Activated T-helper 1 cell treated with anti-CD3 and anti-CD28 coated beads, Interleukin-12 subunit alpha, Interleukin-12 subunit beta, Interleukin-2, Interleukin-4 antibody, amounts not matched to agents 30 ng/mL and 10 ng/mL and 1 ng/mL, durations not matched to agents 14 hours and 24 hours and 36 hours (primary cell): ENCODE measurements at regions of chr2 and their contacts with region 1.

Region 1: DNA sequence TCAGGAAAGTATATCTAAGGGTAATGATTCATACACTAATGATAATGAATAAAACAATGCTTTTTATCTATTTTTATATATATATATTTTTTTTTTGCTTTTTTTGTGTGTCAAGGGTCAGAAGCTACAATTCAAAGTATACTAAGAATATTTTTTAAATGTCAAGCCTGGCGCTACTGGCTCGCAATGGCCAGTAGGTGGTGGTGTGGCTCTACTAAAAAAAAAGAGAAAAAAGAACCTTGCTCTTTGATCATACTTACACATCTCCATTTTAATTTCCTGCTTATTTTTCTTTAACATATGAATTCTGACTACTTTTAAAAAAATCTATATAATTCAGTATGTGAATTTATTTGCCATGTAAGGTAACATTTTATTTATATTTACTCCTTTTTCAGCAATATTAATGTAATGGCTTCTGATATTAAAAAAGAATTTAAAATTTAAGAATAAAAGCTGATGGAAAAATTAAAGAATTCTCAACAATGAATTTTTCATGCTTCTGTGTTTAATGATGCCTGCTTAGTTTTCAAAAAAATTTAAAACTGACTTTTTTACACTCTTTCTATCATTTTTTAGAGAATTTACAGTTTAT is 232.9 kb downstream of the GULP1 start:
- DNase-seq: no peak
- H3K4me3 Mint-ChIP-seq: no peak overlapping the region
- H3K27ac Mint-ChIP-seq: no peak overlapping the region
- H3K4me1 Mint-ChIP-seq: no peaks in the 10 kb centered on the region
- H3K27me3 Mint-ChIP-seq: peaks cover 2% of the 10 kb centered on the region

Region 2: GRCh38 chr2:188983427-188984064 is 458.9 kb after region 1 on chr2:
- intact Hi-C with region 1: loop called (anchors 1 kb)
- DNase-seq: no peak
- H3K4me3 Mint-ChIP-seq: no peak overlapping the region
- H3K27ac Mint-ChIP-seq: no peak overlapping the region
- H3K4me1 Mint-ChIP-seq: peaks cover 12% of the 10 kb centered on the region
- H3K27me3 Mint-ChIP-seq: peaks cover 2% of the 10 kb centered on the region

Region 3: DNA sequence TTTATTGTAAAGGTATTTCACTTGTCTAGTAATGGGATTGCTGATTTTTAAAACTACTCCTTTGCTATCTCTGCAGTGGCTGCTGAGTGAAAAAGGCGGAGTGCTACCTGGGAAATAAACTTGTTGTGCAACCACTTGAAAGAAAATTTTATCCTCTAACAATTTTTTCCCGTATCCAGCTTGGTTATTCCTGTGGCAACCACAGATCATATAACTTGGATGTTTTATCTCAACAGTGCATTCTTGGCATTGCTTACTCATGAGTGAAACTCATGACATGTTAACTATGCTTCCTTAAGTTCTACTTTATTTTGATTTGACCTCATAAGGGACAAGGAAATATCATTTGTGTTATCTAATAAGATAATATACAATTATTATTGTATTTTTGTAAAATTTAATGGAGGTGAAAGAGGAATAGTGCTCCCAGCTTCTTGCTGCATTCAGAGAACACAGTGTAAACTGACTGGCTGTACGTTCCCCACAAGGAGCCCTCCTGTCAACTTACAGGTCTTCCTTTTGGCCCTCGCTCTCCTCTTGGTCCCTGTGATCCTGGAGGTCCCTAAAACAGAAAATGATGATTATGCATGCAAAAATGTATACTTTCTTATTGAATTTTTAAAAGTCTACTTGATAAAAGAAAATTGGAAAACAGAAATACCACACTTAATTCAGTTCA is 572.3 kb after region 1 on chr2:
- intact Hi-C with region 1: loop called (anchors 5 kb)
- DNase-seq: no peak
- H3K4me3 Mint-ChIP-seq: no peak overlapping the region
- H3K27ac Mint-ChIP-seq: no peak overlapping the region
- H3K4me1 Mint-ChIP-seq: no peaks in the 10 kb centered on the region
- H3K27me3 Mint-ChIP-seq: no peaks in the 10 kb centered on the region

Region 4: DNA sequence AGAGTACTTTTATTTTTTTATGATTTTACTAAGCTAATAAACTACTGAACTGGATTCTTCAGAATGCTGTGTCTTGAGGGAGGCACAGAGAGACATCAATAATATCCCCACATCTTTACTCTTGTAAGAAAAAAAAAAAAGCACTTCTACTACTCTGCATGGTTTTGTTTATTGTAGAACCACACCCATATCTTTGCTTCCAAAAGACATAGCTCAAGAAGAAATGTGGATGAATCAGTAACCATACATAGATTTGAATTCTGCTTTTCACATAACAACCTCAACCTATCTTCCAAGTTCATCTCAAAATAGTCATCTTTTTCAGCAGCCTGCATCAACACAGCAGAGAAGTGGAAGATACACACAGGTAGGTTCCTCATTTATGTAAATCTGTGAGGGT is 667.1 kb after region 1 on chr2:
- intact Hi-C with region 1: no loop called
- DNase-seq: no peak
- H3K4me3 Mint-ChIP-seq: no peak overlapping the region
- H3K27ac Mint-ChIP-seq: no peak overlapping the region
- H3K4me1 Mint-ChIP-seq: no peaks in the 10 kb centered on the region
- H3K27me3 Mint-ChIP-seq: no peaks in the 10 kb centered on the region

Region 5: GRCh38 chr2:189412330-189412953 is 887.8 kb after region 1 on chr2:
- intact Hi-C with region 1: loop called (anchors 1 kb)
- DNase-seq: peak; percentile 14
- H3K4me3 Mint-ChIP-seq: no peak overlapping the region
- H3K27ac Mint-ChIP-seq: no peak overlapping the region
- H3K4me1 Mint-ChIP-seq: peaks cover 9% of the 10 kb centered on the region
- H3K27me3 Mint-ChIP-seq: no peaks in the 10 kb centered on the region